ENCODE measurements at regions of chr11 and their contacts with region 1.

Region 1: DNA sequence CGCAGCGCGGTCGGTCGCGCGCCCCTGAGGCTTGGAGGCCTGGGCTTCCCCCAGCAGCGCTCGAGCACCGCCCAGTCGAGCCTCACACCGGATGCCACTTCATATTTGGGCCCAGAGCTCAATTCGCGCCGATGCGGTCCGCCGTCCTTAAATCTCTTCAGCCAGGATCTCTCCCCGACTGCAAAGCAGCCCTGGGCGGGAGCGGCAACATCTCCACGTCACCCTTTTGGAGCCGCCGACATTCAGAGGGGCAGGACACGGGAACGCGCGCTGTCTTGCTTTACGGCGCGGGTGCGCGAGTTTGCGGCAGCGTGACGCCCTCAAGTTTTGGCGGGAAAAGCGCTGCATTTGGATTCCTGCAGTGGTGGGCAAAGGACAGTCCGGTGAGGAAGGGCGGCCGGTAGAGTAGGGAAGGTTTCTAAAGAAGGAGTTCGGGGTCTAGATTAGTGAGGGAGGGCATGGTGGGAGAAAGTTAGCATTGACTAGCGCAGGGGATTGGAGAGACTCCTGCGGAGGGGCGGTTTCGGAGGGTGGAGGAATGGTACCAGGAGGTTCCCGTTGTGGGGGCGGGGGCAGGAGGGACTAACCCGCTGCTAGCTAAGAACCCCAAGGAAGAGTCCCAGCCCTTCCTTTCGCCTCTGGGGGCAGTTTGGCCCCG is 796 bp downstream of the CHEK1 start:
- DNase-seq: peak; percentile 85 to 96
- H3K4me3 ChIP-seq: peak overlapping the region; percentile 82 to 97 (median 92)
- H3K27ac ChIP-seq: peak overlapping the region; percentile 98
- H3K4me1 ChIP-seq: peaks cover 0 to 5% (median 2%) of the 10 kb centered on the region in 4 experiments; a peak in 3 of 7 replicates
- H3K27me3 ChIP-seq: no peaks in the 10 kb centered on the region
- CTCF ChIP-seq: no peak
- EP300 ChIP-seq: no peak
- POLR2A ChIP-seq: peak; percentile 73 to 88
- RAD21 ChIP-seq: no peak

Region 2: GRCh38 chr11:125568970-125569914 is 56.5 kb before region 1 on chr11 and contains the start of gene EI24:
- CTCF ChIA-PET with region 1: interaction called, 3 read pairs
- POLR2A ChIA-PET with region 1: interaction called, 15 read pairs
- DNase-seq: peak; percentile 87 to 91
- H3K4me3 ChIP-seq: peak within 1 kb of the TSS; percentile 69 to 99 (median 96)
- H3K27ac ChIP-seq: peak within 1 kb of the TSS; percentile 48
- H3K4me1 ChIP-seq: peaks cover 2 to 10% (median 5%) of the 10 kb centered on the region in 4 experiments; a peak in 6 of 7 replicates
- H3K27me3 ChIP-seq: no peaks in the 10 kb centered on the region
- CTCF ChIP-seq: peak; percentile 54 to 75 (median 73)
- EP300 ChIP-seq: no peak
- POLR2A ChIP-seq: peak; percentile 48 to 78
- RAD21 ChIP-seq: peak; percentile 50 to 59
- total RNA-seq, gene EI24: 130 and 135 TPM in 2 replicates

Region 3: GRCh38 chr11:125592305-125593112 is 33.2 kb before region 1 on chr11 and contains the start of gene STT3A:
- CTCF ChIA-PET with region 1: no interaction called
- POLR2A ChIA-PET with region 1: interaction called, 49 read pairs
- DNase-seq: peak; percentile 97 to 98
- H3K4me3 ChIP-seq: peak within 1 kb of the TSS; percentile 84 to 93 (median 88)
- H3K27ac ChIP-seq: peak within 1 kb of the TSS; percentile 70
- H3K4me1 ChIP-seq: peaks cover 0 to 2% (median 0%) of the 10 kb centered on the region in 4 experiments; a peak in 2 of 7 replicates
- H3K27me3 ChIP-seq: no peaks in the 10 kb centered on the region
- CTCF ChIP-seq: no peak
- EP300 ChIP-seq: no peak
- POLR2A ChIP-seq: peak in 1 of 2 experiments; percentile 77; a peak in 2 of 3 replicates
- RAD21 ChIP-seq: no peak
- total RNA-seq, gene STT3A: 173 and 175 TPM in 2 replicates

Region 4: DNA sequence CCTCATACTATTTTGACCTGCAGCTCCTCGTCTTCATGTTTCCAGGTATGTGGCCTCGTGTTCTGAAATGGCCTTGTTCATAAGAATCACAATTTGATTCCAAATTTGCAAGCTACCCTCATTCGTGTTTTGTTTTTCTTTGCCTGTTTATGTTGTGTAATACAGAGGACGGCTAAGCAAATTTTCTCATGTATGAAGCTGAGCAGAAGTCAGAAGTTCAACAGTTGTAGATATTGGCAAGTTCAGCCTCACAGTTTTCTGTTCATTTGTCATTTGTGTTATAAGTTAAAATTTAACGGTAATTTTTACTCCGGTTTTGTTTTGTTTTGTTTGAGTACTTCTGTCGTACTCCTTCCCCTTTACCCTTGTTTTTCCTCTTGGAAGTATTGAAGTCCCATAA is 16.2 kb before region 1 on chr11:
- CTCF ChIA-PET with region 1: interaction called, 4 read pairs
- POLR2A ChIA-PET with region 1: interaction called, 31 read pairs
- DNase-seq: no peak
- H3K4me3 ChIP-seq: no peak overlapping the region
- H3K27ac ChIP-seq: no peak overlapping the region
- H3K4me1 ChIP-seq: no peaks in the 10 kb centered on the region
- H3K27me3 ChIP-seq: no peaks in the 10 kb centered on the region
- CTCF ChIP-seq: no peak
- EP300 ChIP-seq: no peak
- POLR2A ChIP-seq: no peak
- RAD21 ChIP-seq: no peak

Region 5: DNA sequence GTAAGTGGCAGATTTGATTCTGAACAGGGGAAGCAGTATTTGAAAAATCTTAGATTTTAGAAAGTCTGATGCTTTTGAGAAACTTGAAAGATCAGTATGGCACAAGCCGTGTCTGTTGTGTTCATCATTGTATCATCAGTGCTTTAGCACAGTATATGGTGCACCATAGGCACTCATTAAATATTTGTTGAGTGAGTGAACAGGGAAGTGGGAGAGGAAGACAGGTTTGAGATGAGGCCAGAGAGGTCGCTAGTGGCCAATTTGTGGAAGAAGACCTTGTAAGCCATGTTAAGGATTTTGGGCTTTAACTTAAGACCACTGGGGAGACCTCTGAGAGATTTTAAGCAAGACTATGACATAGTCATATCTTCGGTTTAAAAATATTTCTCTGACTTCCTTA is 12.1 kb after region 1 on chr11:
- CTCF ChIA-PET with region 1: interaction called, 4 read pairs
- POLR2A ChIA-PET with region 1: interaction called, 16 read pairs
- DNase-seq: no peak
- H3K4me3 ChIP-seq: no peak overlapping the region
- H3K27ac ChIP-seq: no peak overlapping the region
- H3K4me1 ChIP-seq: no peaks in the 10 kb centered on the region
- H3K27me3 ChIP-seq: no peaks in the 10 kb centered on the region
- CTCF ChIP-seq: peak in 1 of 3 experiments; percentile 14; a peak in 1 of 4 replicates
- EP300 ChIP-seq: no peak
- POLR2A ChIP-seq: no peak
- RAD21 ChIP-seq: peak in 1 of 2 experiments; percentile 10; a peak in 1 of 4 replicates

Region 6: DNA sequence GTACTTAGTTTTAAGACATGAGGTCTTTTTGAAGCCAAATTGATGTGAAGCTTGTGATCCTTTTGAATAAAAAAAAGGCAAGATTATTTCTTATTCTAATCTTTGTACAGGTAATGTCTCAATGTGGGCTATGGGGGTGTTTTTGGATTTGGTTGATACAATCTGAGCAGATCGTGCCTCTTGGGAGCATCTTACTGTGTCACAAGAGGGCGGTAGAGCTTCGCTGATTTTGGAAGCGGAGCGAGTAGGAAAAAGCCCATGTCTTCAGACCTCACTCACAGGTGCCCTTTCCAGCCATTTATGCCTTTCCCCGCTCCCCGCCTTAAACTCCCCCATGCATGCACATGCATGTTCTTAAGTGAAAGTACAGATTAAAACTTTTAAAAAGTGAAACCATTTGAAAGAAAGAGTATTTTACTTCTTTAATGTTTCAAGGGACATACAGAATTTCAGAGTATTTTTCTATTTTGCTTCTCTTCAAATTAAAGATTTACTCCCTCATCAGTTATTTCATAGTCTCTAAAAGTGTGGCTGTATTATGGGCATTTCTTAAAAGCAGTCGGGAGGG is 297.3 kb after region 1 on chr11:
- CTCF ChIA-PET with region 1: no interaction called
- POLR2A ChIA-PET with region 1: no interaction called
- DNase-seq: peak in 1 of 2 experiments; percentile 34
- H3K4me3 ChIP-seq: no peak overlapping the region
- H3K27ac ChIP-seq: no peak overlapping the region
- H3K4me1 ChIP-seq: no peaks in the 10 kb centered on the region; a peak in 1 of 7 replicates
- H3K27me3 ChIP-seq: no peaks in the 10 kb centered on the region; a peak in 1 of 7 replicates
- CTCF ChIP-seq: peak; percentile 64 to 88 (median 86)
- EP300 ChIP-seq: no peak
- POLR2A ChIP-seq: no peak
- RAD21 ChIP-seq: peak; percentile 96